Calu3 (cell line): ENCODE measurements at regions of chr3 and their contacts with region 1.

Region 1: GRCh38 chr3:115019900-115020299 is 127.2 kb downstream of the ZBTB20 start:
- DNase-seq: no peak
- H3K4me3 Mint-ChIP-seq: no peak overlapping the region
- H3K27ac Mint-ChIP-seq: no peak overlapping the region
- H3K4me1 Mint-ChIP-seq: no peaks in the 10 kb centered on the region
- H3K27me3 Mint-ChIP-seq: no peaks in the 10 kb centered on the region
- CTCF ChIP-seq: no peak

Region 2: GRCh38 chr3:114974387-114974786 is 45.5 kb before region 1 on chr3:
- CTCF ChIA-PET with region 1: no interaction called
- intact Hi-C with region 1: loop called (anchors 10 kb)
- DNase-seq: no peak
- H3K4me3 Mint-ChIP-seq: no peak overlapping the region
- H3K27ac Mint-ChIP-seq: no peak overlapping the region
- H3K4me1 Mint-ChIP-seq: no peaks in the 10 kb centered on the region
- H3K27me3 Mint-ChIP-seq: no peaks in the 10 kb centered on the region
- CTCF ChIP-seq: no peak

Region 3: GRCh38 chr3:115187149-115187757 is 167.4 kb after region 1 on chr3:
- CTCF ChIA-PET with region 1: no interaction called
- intact Hi-C with region 1: no loop called
- DNase-seq: no peak
- H3K4me3 Mint-ChIP-seq: no peak overlapping the region
- H3K27ac Mint-ChIP-seq: no peak overlapping the region
- H3K4me1 Mint-ChIP-seq: no peaks in the 10 kb centered on the region
- H3K27me3 Mint-ChIP-seq: no peaks in the 10 kb centered on the region
- CTCF ChIP-seq: no peak